ENCODE measurements at regions of chr2 and their contacts with region 1.

Region 1: GRCh38 chr2:35391736-35392442 is 963.7 kb upstream of the CRIM1 start:
- DNase-seq: peak in 1 of 14 experiments; percentile 6
- ATAC-seq: no peak
- H3K4me3 ChIP-seq: no peak overlapping the region
- H3K4me3 Mint-ChIP-seq: no peak overlapping the region
- H3K27ac ChIP-seq: no peak overlapping the region
- H3K27ac Mint-ChIP-seq: no peak overlapping the region
- H3K4me1 ChIP-seq: no peaks in the 10 kb centered on the region
- H3K4me1 Mint-ChIP-seq: no peaks in the 10 kb centered on the region
- H3K27me3 ChIP-seq: no peaks in the 10 kb centered on the region
- H3K27me3 Mint-ChIP-seq: no peaks in the 10 kb centered on the region
- CTCF ChIP-seq: no peak

Region 2: DNA sequence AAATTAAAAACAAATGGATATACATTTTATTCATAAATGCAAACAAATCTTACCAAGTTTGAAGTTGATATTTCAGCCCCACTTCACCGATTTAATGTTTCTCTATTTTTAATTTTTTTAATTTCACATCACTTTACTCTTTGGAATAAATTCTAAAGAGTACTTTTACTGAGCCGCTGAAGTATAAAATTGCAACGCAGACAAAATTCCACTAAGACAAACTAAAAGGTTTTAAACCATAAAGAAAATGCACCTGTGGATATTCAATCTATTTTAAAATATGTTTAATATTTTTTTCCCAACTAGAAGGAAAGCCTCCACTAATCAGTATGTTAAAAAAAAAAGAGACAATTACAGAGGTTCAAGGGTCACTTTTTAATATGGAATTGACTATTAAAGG is 110.2 kb before region 1 on chr2:
- CTCF ChIA-PET with region 1: no interaction called
- POLR2A ChIA-PET with region 1: no interaction called
- intact Hi-C with region 1: no loop called
- DNase-seq: no peak
- ATAC-seq: no peak
- H3K4me3 ChIP-seq: no peak overlapping the region
- H3K4me3 Mint-ChIP-seq: no peak overlapping the region
- H3K27ac ChIP-seq: no peak overlapping the region
- H3K27ac Mint-ChIP-seq: no peak overlapping the region
- H3K4me1 ChIP-seq: no peaks in the 10 kb centered on the region
- H3K4me1 Mint-ChIP-seq: no peaks in the 10 kb centered on the region
- H3K27me3 ChIP-seq: no peaks in the 10 kb centered on the region
- H3K27me3 Mint-ChIP-seq: no peaks in the 10 kb centered on the region
- CTCF ChIP-seq: no peak

Region 3: GRCh38 chr2:35356332-35356731 is 35.6 kb before region 1 on chr2:
- CTCF ChIA-PET with region 1: no interaction called
- POLR2A ChIA-PET with region 1: no interaction called
- intact Hi-C with region 1: loop called (anchors 1 kb)
- DNase-seq: no peak
- ATAC-seq: no peak
- H3K4me3 ChIP-seq: no peak overlapping the region
- H3K4me3 Mint-ChIP-seq: no peak overlapping the region
- H3K27ac ChIP-seq: no peak overlapping the region
- H3K27ac Mint-ChIP-seq: no peak overlapping the region
- H3K4me1 ChIP-seq: no peaks in the 10 kb centered on the region
- H3K4me1 Mint-ChIP-seq: no peaks in the 10 kb centered on the region
- H3K27me3 ChIP-seq: no peaks in the 10 kb centered on the region
- H3K27me3 Mint-ChIP-seq: no peaks in the 10 kb centered on the region
- CTCF ChIP-seq: no peak

Region 4: GRCh38 chr2:35503715-35504180 is 111.9 kb after region 1 on chr2:
- CTCF ChIA-PET with region 1: no interaction called
- POLR2A ChIA-PET with region 1: no interaction called
- intact Hi-C with region 1: no loop called
- DNase-seq: no peak
- ATAC-seq: no peak
- H3K4me3 ChIP-seq: no peak overlapping the region
- H3K4me3 Mint-ChIP-seq: no peak overlapping the region
- H3K27ac ChIP-seq: no peak overlapping the region
- H3K27ac Mint-ChIP-seq: no peak overlapping the region
- H3K4me1 ChIP-seq: no peaks in the 10 kb centered on the region
- H3K4me1 Mint-ChIP-seq: no peaks in the 10 kb centered on the region
- H3K27me3 ChIP-seq: no peaks in the 10 kb centered on the region
- H3K27me3 Mint-ChIP-seq: no peaks in the 10 kb centered on the region
- CTCF ChIP-seq: no peak

Measured in CD4-positive, alpha-beta T cell (primary cell).